Vagina (tissue), 2 donors: ENCODE measurements at regions of chr14 and their contacts with region 1.

Region 1: DNA sequence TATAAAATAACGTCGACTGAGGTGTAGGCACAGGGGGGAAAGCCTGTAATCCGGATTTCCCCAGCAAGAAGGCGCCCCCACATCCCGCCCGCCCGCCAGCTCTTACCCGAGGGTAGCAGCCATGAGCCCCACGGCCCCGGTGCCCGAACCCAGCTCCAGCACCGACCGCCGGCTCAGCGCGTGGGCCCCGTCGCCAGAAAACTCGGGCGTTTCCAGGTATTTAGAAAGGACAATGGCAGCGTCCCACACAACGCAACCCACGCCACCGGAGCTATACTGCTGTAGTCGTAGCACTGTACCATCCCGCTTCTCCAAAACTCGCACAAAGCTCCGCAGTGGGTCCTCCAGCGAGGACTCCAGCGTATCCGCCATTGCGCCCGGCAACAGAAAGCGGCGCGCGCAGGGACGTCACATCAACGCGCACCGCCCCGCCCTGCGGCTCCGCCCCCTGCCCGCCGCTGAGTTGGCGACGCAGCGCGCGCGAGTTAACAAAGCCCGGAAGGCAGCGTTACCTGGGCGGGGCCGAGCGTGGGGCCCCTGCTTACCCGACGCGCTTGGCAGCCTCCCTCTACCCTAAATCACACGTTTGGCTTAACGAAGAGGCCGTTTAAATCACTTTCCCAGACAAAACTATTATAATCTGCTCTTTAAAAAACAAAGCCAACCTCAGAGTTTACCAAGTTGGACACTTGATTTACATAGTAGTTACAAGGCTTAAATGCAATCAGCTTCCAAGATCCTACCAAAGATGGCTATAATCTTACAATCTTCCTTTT is at the start of gene VCPKMT:
- DNase-seq: peak in 1 of 2 donors; percentile 90
- H3K4me3 ChIP-seq: peak within 1 kb of the TSS; percentile 78 to 92
- H3K27ac ChIP-seq: peak within 1 kb of the TSS; percentile 94
- H3K4me1 ChIP-seq: peaks cover 23% of the 10 kb centered on the region
- H3K27me3 ChIP-seq: no peaks in the 10 kb centered on the region
- CTCF ChIP-seq: peak in 1 of 3 experiments; percentile 23
- POLR2A ChIP-seq: peak in 1 of 2 donors; percentile 82
- total RNA-seq, gene VCPKMT: 2.5 TPM

Region 2: DNA sequence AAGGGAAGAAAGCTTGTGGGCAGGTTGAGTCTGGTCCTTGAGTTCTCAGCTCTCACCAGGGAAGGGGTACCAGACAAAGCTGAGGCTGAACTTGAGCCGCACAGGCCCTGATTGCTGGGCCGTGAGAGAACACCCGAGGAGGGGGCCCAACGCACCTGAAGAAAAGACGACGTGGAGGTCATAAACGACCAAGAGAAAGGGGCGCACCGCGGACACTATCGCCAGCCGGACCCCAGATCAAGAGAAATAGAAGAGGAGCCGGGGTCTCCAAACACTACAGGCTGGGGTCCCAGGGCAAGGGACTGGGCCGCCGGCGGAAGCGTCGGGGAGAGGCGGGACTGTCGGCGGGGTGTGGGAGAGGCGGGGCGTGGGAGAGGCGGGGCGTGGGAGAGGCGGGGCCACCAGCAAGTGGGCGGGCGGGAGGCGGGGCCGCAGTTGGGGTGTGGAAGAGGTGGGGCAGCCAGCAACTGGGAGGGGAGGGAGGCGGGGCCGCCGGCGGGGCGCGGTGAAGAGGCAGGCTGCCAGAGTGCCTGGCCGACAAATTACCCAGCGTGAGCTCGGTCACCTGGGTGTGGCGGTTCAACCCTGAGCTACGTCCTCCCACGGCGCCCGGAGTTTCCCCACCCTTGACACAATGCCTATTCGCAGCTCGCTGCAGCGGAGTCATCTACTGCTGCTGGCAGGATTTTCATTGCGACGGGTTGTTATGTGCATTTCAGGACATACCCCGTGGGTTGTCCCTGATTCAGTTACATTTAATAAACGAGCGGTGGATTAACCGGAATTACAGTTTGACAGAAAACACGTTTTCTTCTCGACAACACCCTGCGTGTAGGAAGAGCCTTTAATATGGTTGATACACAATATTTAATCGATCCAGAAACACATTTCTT is 248.3 kb before region 1 on chr14:
- intact Hi-C with region 1: loop called (anchors 10 kb)
- DNase-seq: peak in 1 of 2 donors; percentile 98
- H3K4me3 ChIP-seq: peak overlapping the region; percentile 48 to 57
- H3K27ac ChIP-seq: peak overlapping the region; percentile 88
- H3K4me1 ChIP-seq: peaks cover 21% of the 10 kb centered on the region
- H3K27me3 ChIP-seq: no peaks in the 10 kb centered on the region
- CTCF ChIP-seq: peak in 1 of 3 experiments; percentile 22
- POLR2A ChIP-seq: peak in 1 of 2 donors; percentile 74

Region 3: GRCh38 chr14:50060871-50061663 is 55.3 kb before region 1 on chr14:
- intact Hi-C with region 1: loop called (anchors 10 kb)
- DNase-seq: no peak
- H3K4me3 ChIP-seq: no peak overlapping the region
- H3K27ac ChIP-seq: peak overlapping the region; percentile 89
- H3K4me1 ChIP-seq: peaks cover 33% of the 10 kb centered on the region
- H3K27me3 ChIP-seq: no peaks in the 10 kb centered on the region
- CTCF ChIP-seq: peak in 1 of 3 experiments; percentile 29
- POLR2A ChIP-seq: no peak

Region 4: GRCh38 chr14:50363714-50364111 is 247.3 kb after region 1 on chr14:
- intact Hi-C with region 1: no loop called
- DNase-seq: no peak
- H3K4me3 ChIP-seq: peak overlapping the region; percentile 10 to 36
- H3K27ac ChIP-seq: peak overlapping the region; percentile 26
- H3K4me1 ChIP-seq: peaks cover 24% of the 10 kb centered on the region
- H3K27me3 ChIP-seq: no peaks in the 10 kb centered on the region
- CTCF ChIP-seq: no peak
- POLR2A ChIP-seq: no peak